ENCODE measurements at regions of chr3 and their contacts with region 1.

Region 1: DNA sequence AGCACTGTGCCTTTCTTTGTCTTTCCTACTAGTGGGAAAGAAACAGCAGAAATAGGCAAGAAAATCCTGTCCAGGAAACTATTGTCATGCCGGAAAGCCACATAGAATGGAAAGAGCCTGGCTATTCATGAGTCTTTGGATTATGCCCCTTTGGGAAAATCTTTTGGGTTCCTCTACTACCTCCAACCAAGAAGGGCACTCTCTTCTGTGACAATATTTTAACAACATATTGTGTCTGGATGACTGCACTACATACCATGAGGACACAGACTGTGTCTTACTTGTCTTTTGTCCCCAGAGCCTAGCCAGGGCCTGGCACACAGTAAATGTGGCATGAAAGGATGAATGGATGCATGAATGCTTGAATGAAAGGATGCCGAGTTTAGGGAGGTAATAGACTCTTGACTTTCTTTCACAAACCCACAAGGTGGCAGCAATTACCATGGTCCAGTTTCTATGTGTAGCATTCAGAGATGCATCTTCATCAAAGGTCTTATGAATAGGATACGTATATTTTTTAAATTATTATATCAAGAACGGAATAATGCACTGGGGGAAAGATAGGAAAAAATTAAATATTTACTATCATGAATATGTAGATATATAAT is 30.3 kb downstream of the ARL14 start:
- DNase-seq: peak; percentile 22 to 40 (median 32)
- H3K4me3 ChIP-seq: no peak overlapping the region
- H3K4me3 Mint-ChIP-seq: no peak overlapping the region
- H3K27ac ChIP-seq: no peak overlapping the region
- H3K27ac Mint-ChIP-seq: no peak overlapping the region
- H3K4me1 ChIP-seq: no peaks in the 10 kb centered on the region
- H3K4me1 Mint-ChIP-seq: no peaks in the 10 kb centered on the region
- H3K27me3 ChIP-seq: peaks cover 0 to 2% of the 10 kb centered on the region in 2 donors
- H3K27me3 Mint-ChIP-seq: peaks cover 5 to 10% (median 5%) of the 10 kb centered on the region in 3 donors
- CTCF ChIP-seq: peak; percentile 61

Region 2: DNA sequence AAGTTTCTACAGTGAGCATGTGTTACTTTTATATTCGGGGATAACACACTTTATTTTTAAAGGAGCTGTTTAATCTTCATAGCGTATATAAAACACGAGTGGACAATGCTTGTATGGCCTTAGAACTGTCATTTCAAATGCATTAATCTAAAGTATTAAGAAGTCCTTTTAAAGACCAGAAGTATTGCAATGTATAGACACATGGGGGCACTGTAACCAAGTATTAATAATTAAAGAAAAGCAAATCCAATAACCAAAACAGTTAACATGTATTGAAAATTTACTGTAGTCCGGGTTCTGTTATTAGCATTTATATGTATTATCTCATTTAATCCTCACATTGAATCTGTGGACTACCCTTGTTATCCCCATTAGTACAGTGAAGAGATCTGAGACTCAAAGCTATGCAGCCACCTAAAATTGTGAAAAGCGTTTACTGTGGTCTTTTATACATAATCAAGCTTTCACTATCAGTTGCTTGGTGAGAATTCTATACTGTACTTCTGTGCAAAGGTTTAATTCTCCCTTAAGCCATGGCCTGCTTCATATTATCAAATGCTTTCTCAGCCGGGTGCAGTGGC is 20.2 kb before region 1 on chr3:
- intact Hi-C with region 1: no loop called
- DNase-seq: peak in 1 of 3 donors; percentile 24
- H3K4me3 ChIP-seq: no peak overlapping the region
- H3K4me3 Mint-ChIP-seq: no peak overlapping the region
- H3K27ac ChIP-seq: no peak overlapping the region
- H3K27ac Mint-ChIP-seq: no peak overlapping the region
- H3K4me1 ChIP-seq: no peaks in the 10 kb centered on the region
- H3K4me1 Mint-ChIP-seq: no peaks in the 10 kb centered on the region
- H3K27me3 ChIP-seq: no peaks in the 10 kb centered on the region
- H3K27me3 Mint-ChIP-seq: peaks cover 0 to 4% (median 2%) of the 10 kb centered on the region in 3 donors
- CTCF ChIP-seq: peak; percentile 46

Region 3: GRCh38 chr3:160739079-160739478 is 31.8 kb after region 1 on chr3:
- intact Hi-C with region 1: no loop called
- DNase-seq: no peak
- H3K4me3 ChIP-seq: no peak overlapping the region
- H3K4me3 Mint-ChIP-seq: no peak overlapping the region
- H3K27ac ChIP-seq: no peak overlapping the region
- H3K27ac Mint-ChIP-seq: no peak overlapping the region
- H3K4me1 ChIP-seq: no peaks in the 10 kb centered on the region
- H3K4me1 Mint-ChIP-seq: peaks cover 1% of the 10 kb centered on the region
- H3K27me3 ChIP-seq: no peaks in the 10 kb centered on the region
- H3K27me3 Mint-ChIP-seq: peaks cover 0 to 3% (median 1%) of the 10 kb centered on the region in 3 donors
- CTCF ChIP-seq: no peak

Region 4: DNA sequence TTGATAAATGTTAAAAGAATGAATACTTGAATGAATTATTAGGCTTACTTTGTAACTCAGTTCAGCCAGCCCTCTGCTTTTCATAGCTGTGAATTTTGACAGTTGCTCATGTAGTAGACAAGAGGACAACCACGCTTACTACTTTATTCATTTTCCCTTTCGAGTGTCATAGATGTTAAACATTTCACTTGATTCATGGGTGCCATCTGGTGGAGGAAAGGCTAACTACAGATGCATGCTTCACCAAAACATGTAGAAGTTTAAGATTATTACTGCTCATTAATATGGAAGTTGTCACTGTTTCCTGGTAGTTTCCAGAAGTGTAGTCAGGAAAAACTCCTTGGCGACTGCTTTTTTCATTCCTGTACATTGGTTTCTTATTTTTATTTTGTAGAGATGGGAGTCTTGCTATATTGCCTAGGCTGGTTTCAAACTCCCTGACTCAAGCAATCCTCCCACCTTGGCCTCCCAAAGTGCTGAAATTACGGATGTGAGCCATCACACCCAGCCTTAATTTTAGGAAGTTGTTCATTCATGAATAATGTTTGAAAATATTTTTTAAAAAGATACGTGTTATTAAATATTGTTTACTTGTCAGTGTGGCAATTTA is 234.7 kb after region 1 on chr3:
- intact Hi-C with region 1: loop called (anchors 2 kb)
- DNase-seq: peak; percentile 53 to 68 (median 57)
- H3K4me3 ChIP-seq: no peak overlapping the region
- H3K4me3 Mint-ChIP-seq: no peak overlapping the region
- H3K27ac ChIP-seq: no peak overlapping the region
- H3K27ac Mint-ChIP-seq: no peak overlapping the region
- H3K4me1 ChIP-seq: no peaks in the 10 kb centered on the region
- H3K4me1 Mint-ChIP-seq: peaks cover 7% of the 10 kb centered on the region
- H3K27me3 ChIP-seq: no peaks in the 10 kb centered on the region
- H3K27me3 Mint-ChIP-seq: no peaks in the 10 kb centered on the region
- CTCF ChIP-seq: peak; percentile 92

Measured in CD14-positive monocyte (primary cell).